ENCODE measurements at regions of chr2 and their contacts with region 1.

Region 1: GRCh38 chr2:198127627-198128026 is 323.2 kb downstream of the PLCL1 start:
- DNase-seq: peak in 6 of 7 donors; percentile 40 to 61 (median 55)
- H3K4me3 ChIP-seq: no peak overlapping the region
- H3K27ac ChIP-seq: no peak overlapping the region
- H3K4me1 ChIP-seq: no peaks in the 10 kb centered on the region
- H3K27me3 ChIP-seq: no peaks in the 10 kb centered on the region
- CTCF ChIP-seq: peak; percentile 63 to 77 (median 74)
- POLR2A ChIP-seq: no peak

Region 2: GRCh38 chr2:197804049-197804757 is 323.4 kb before region 1 on chr2 and contains the start of gene PLCL1:
- intact Hi-C with region 1: loop called (anchors 5 kb)
- DNase-seq: peak; percentile 92 to 97 (median 95)
- H3K4me3 ChIP-seq: peak within 1 kb of the TSS; percentile 28 to 85 (median 84)
- H3K27ac ChIP-seq: peak within 1 kb of the TSS in 3 of 5 donors; percentile 63 to 78 (median 69)
- H3K4me1 ChIP-seq: peaks cover 10 to 27% of the 10 kb centered on the region in 2 donors
- H3K27me3 ChIP-seq: no peaks in the 10 kb centered on the region
- CTCF ChIP-seq: peak in 3 of 6 experiments; percentile 8 to 34 (median 16)
- POLR2A ChIP-seq: peak in 1 of 2 donors; percentile 77
- total RNA-seq, gene PLCL1: 3.3 to 24.0 (median 6.4) TPM

Region 3: GRCh38 chr2:197929008-197929885 is 198.4 kb before region 1 on chr2:
- intact Hi-C with region 1: no loop called
- DNase-seq: peak in 3 of 7 donors; percentile 9 to 57 (median 24)
- H3K4me3 ChIP-seq: no peak overlapping the region
- H3K27ac ChIP-seq: no peak overlapping the region
- H3K4me1 ChIP-seq: peaks cover 18 to 19% of the 10 kb centered on the region in 2 donors
- H3K27me3 ChIP-seq: no peaks in the 10 kb centered on the region
- CTCF ChIP-seq: no peak
- POLR2A ChIP-seq: no peak

Region 4: GRCh38 chr2:198073253-198073652 is 54.4 kb before region 1 on chr2:
- intact Hi-C with region 1: no loop called
- DNase-seq: no peak
- H3K4me3 ChIP-seq: no peak overlapping the region
- H3K27ac ChIP-seq: no peak overlapping the region
- H3K4me1 ChIP-seq: no peaks in the 10 kb centered on the region
- H3K27me3 ChIP-seq: no peaks in the 10 kb centered on the region
- CTCF ChIP-seq: no peak
- POLR2A ChIP-seq: no peak

Region 5: DNA sequence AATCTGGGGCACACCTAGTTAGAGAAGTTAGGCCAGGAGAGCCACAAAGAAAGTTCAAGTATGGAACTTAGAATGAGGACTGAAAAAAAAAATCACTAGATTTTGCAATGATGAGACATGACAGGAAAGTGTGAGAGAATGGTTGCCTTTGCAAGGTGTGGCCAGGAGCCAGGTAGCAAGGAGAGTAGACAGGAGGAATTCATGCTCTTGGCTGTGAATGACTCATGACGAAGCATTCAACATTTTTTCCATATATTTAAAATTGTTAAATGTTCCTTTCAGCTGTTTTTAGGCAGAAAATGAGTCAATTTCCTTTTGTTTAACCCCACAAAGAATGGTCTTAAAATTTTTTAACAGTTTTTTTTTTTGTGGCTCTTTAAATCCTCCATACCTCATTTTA is 313.6 kb after region 1 on chr2:
- intact Hi-C with region 1: no loop called
- DNase-seq: no peak
- H3K4me3 ChIP-seq: no peak overlapping the region
- H3K27ac ChIP-seq: no peak overlapping the region
- H3K4me1 ChIP-seq: no peaks in the 10 kb centered on the region
- H3K27me3 ChIP-seq: no peaks in the 10 kb centered on the region
- CTCF ChIP-seq: no peak
- POLR2A ChIP-seq: no peak